Tibial artery (tissue), 4 donors: ENCODE measurements at regions of chr4 and their contacts with region 1.

Region 1: DNA sequence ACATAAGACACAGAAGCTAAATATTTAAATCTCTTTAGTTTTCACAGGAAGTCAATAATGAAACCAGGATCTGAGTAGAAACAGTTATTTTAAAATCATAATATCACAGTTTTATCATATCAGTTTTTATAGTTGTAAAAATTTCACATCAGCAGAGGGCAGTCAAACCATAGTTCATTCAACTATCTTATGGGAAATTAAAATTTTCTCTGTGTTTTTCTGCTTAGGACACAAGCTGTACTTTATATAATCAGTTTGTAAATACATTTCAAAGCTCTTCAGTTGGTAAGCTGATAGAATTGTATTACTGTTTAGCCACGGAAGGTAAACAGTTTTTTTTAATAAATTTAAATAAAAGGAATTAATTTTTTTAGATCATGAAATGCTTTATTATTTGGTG is 204.8 kb upstream of the NUDT6 start:
- DNase-seq: no peak
- H3K4me3 ChIP-seq: no peak overlapping the region
- H3K27ac ChIP-seq: no peak overlapping the region
- H3K4me1 ChIP-seq: peaks cover 0 to 7% (median 0%) of the 10 kb centered on the region in 4 donors
- H3K27me3 ChIP-seq: no peaks in the 10 kb centered on the region
- CTCF ChIP-seq: peak; percentile 32 to 52

Region 2: DNA sequence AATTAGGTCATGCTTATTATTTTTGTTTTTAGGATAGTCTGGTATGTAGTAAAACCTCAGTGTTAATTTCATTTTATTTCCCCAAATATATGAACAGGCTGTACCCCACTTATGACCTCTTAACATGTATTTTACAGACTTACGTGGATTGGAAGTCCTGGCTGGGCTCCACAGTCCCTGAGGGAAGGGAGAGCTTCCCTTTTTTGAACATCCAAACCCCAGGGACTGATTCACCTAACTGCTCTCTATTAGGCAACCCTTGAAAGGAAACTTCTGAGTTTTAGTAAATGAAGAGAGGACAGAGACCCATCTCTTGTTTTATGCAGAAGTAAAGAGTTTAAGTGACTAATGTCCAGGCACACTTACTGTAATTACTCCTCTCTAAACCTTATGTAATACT is 36.3 kb after region 1 on chr4:
- intact Hi-C with region 1: no loop called
- DNase-seq: no peak
- H3K4me3 ChIP-seq: no peak overlapping the region
- H3K27ac ChIP-seq: no peak overlapping the region
- H3K4me1 ChIP-seq: peaks cover 0 to 3% (median 0%) of the 10 kb centered on the region in 4 donors
- H3K27me3 ChIP-seq: no peaks in the 10 kb centered on the region
- CTCF ChIP-seq: no peak

Region 3: GRCh38 chr4:123555233-123555806 is 428.1 kb after region 1 on chr4:
- intact Hi-C with region 1: loop called (anchors 10 kb)
- DNase-seq: peak; percentile 92 to 95
- H3K4me3 ChIP-seq: peak overlapping the region; percentile 2 to 13
- H3K27ac ChIP-seq: peak overlapping the region; percentile 70 to 71
- H3K4me1 ChIP-seq: peaks cover 0 to 49% (median 31%) of the 10 kb centered on the region in 4 donors
- H3K27me3 ChIP-seq: no peaks in the 10 kb centered on the region
- CTCF ChIP-seq: no peak

Region 4: GRCh38 chr4:123661080-123661737 is 534.0 kb after region 1 on chr4:
- intact Hi-C with region 1: loop called (anchors 10 kb)
- DNase-seq: no peak
- H3K4me3 ChIP-seq: no peak overlapping the region
- H3K27ac ChIP-seq: no peak overlapping the region
- H3K4me1 ChIP-seq: peaks cover 0 to 21% (median 3%) of the 10 kb centered on the region in 4 donors
- H3K27me3 ChIP-seq: no peaks in the 10 kb centered on the region
- CTCF ChIP-seq: peak; percentile 42 to 49